Activated CD4-positive, alpha-beta T cell treated with anti-CD3 and anti-CD28 coated beads for 36 hours (primary cell): ENCODE measurements at regions of chr19 and their contacts with region 1.

Region 1: DNA sequence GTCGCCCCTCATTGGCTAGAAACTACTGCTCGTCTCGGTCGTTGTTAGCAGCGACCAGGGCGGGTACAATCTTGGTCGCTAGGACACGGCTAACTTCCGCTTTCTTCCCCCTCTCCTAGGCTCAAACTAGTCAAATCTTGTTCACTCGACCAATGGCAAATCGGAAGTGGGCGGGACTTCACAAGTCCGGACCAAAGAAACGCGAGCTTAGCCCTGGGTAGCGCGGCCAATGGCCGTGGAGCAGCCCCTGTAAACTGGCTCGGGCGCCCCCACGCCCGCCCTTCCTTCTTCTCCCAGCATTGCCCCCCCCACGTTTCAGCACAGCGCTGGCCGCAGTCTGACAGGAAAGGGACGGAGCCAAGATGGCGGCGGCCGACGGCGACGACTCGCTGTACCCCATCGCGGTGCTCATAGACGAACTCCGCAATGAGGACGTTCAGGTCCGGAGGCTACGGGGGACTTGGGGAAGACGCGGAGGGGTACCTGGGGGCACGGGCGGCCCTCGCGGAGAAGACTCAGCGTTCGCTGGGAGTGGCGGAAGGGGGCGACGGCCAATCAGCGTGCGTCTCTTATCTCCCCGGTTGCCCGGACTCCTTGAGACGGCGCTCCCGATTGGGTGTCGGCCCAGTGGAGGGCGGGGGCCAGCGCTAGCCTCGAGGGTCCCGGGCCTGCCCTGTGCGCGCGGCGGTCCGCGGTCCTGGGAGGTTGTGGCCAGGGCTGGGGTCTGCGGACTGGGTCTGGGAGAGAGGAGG is at the start of gene PPP2R1A:
- DNase-seq: peak; percentile 99
- ATAC-seq: peak; percentile 93
- H3K4me3 Mint-ChIP-seq: peak within 1 kb of the TSS; percentile 91
- H3K27ac Mint-ChIP-seq: peak within 1 kb of the TSS; percentile 97
- H3K4me1 Mint-ChIP-seq: peaks cover 41% of the 10 kb centered on the region
- H3K27me3 Mint-ChIP-seq: no peaks in the 10 kb centered on the region
- total RNA-seq, gene PPP2R1A: 215 to 231 TPM

Region 2: DNA sequence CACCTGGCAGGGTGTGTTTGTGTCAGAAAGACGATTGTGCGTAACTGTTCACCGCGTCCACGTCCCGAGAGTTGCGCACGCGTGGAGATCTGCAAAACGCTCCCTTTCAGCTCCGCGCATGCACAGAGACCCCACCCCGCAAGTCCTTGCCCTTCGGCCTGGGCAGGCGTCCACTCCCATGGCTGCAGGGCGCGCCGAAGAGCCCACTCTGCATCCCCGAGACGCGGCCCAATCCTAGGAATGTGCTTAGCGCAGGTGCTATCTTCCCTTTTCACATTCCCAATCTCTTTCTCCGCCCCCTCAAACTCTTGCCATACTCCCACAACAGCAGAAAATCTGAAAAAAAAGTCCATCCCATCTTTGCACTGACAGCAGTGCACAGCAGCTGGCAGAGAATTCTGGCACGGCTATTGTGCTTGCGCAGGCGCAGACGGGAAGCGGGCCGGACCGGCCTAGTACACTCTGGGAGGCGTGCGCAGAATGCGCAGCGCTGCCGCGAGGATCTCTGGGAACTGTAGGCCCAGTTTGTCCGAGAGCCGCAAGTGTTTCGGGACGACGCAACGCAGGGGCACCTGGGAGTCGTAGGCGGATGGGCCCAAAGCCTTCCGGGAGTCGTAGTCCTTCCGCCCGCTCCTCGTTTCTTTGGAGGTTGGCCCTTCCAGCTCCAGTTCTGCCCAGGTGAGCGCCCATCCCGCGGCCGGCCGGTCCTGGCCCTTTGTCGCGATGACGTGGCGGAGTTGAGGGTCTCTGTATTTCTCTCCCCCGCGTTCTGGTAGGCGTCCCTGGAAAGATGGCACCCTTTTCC is 595.7 kb before region 1 on chr19:
- CTCF ChIA-PET with region 1: no interaction called
- POLR2A ChIA-PET with region 1: no interaction called
- intact Hi-C with region 1: loop called in 1 of 2 experiments (anchors 1 kb)
- DNase-seq: peak; percentile 99
- ATAC-seq: peak; percentile 100
- H3K4me3 Mint-ChIP-seq: peak overlapping the region; percentile 84
- H3K27ac Mint-ChIP-seq: peak overlapping the region; percentile 81
- H3K4me1 Mint-ChIP-seq: peaks cover 18% of the 10 kb centered on the region
- H3K27me3 Mint-ChIP-seq: peaks cover 5% of the 10 kb centered on the region

Region 3: GRCh38 chr19:51986309-51987291 is 203.3 kb before region 1 on chr19 and contains the start of gene ZNF350:
- CTCF ChIA-PET with region 1: no interaction called
- POLR2A ChIA-PET with region 1: no interaction called
- intact Hi-C with region 1: loop called in 1 of 2 experiments (anchors 1 kb)
- DNase-seq: peak; percentile 94
- ATAC-seq: peak; percentile 99
- H3K4me3 Mint-ChIP-seq: peak within 1 kb of the TSS; percentile 85
- H3K27ac Mint-ChIP-seq: peak within 1 kb of the TSS; percentile 95
- H3K4me1 Mint-ChIP-seq: peaks cover 8% of the 10 kb centered on the region
- H3K27me3 Mint-ChIP-seq: no peaks in the 10 kb centered on the region
- total RNA-seq, gene ZNF350: 7.1 to 7.9 TPM

Region 4: GRCh38 chr19:52048555-52049501 is 141.1 kb before region 1 on chr19 and contains the start of gene ZNF432:
- CTCF ChIA-PET with region 1: no interaction called
- POLR2A ChIA-PET with region 1: no interaction called
- intact Hi-C with region 1: loop called in 1 of 2 experiments (anchors 1 kb)
- DNase-seq: peak; percentile 88
- ATAC-seq: peak; percentile 88
- H3K4me3 Mint-ChIP-seq: peak within 1 kb of the TSS; percentile 94
- H3K27ac Mint-ChIP-seq: peak within 1 kb of the TSS; percentile 100
- H3K4me1 Mint-ChIP-seq: peaks cover 16% of the 10 kb centered on the region
- H3K27me3 Mint-ChIP-seq: no peaks in the 10 kb centered on the region
- total RNA-seq, gene ZNF432: 11.5 to 12.8 TPM

Region 5: GRCh38 chr19:52171321-52172169 is 18.4 kb before region 1 on chr19 and contains the start of gene ZNF836:
- CTCF ChIA-PET with region 1: interaction called, 4 read pairs
- POLR2A ChIA-PET with region 1: interaction called, 4 read pairs
- intact Hi-C with region 1: loop called (anchors 1 kb)
- DNase-seq: peak; percentile 96
- ATAC-seq: peak; percentile 96
- H3K4me3 Mint-ChIP-seq: peak within 1 kb of the TSS; percentile 87
- H3K27ac Mint-ChIP-seq: peak within 1 kb of the TSS; percentile 93
- H3K4me1 Mint-ChIP-seq: peaks cover 17% of the 10 kb centered on the region
- H3K27me3 Mint-ChIP-seq: no peaks in the 10 kb centered on the region
- total RNA-seq, gene ZNF836: 10.1 to 11.5 TPM

Region 6: GRCh38 chr19:52277574-52277925 is 87.6 kb after region 1 on chr19:
- CTCF ChIA-PET with region 1: no interaction called
- POLR2A ChIA-PET with region 1: no interaction called
- intact Hi-C with region 1: no loop called
- DNase-seq: no peak
- ATAC-seq: no peak
- H3K4me3 Mint-ChIP-seq: no peak overlapping the region
- H3K27ac Mint-ChIP-seq: no peak overlapping the region
- H3K4me1 Mint-ChIP-seq: peaks cover 28% of the 10 kb centered on the region
- H3K27me3 Mint-ChIP-seq: no peaks in the 10 kb centered on the region

Region 7: GRCh38 chr19:52527134-52527955 is 337.4 kb after region 1 on chr19 and contains the start of gene ZNF808:
- CTCF ChIA-PET with region 1: no interaction called
- POLR2A ChIA-PET with region 1: no interaction called
- intact Hi-C with region 1: loop called in 1 of 2 experiments (anchors 1 kb)
- DNase-seq: peak; percentile 99
- ATAC-seq: peak; percentile 92
- H3K4me3 Mint-ChIP-seq: peak within 1 kb of the TSS; percentile 91
- H3K27ac Mint-ChIP-seq: peak within 1 kb of the TSS; percentile 94
- H3K4me1 Mint-ChIP-seq: peaks cover 23% of the 10 kb centered on the region
- H3K27me3 Mint-ChIP-seq: no peaks in the 10 kb centered on the region
- total RNA-seq, gene ZNF808: 25.7 to 29.9 TPM